CD8-positive, alpha-beta memory T cell (primary cell): ENCODE measurements at regions of chr12 and their contacts with region 1.

Region 1: DNA sequence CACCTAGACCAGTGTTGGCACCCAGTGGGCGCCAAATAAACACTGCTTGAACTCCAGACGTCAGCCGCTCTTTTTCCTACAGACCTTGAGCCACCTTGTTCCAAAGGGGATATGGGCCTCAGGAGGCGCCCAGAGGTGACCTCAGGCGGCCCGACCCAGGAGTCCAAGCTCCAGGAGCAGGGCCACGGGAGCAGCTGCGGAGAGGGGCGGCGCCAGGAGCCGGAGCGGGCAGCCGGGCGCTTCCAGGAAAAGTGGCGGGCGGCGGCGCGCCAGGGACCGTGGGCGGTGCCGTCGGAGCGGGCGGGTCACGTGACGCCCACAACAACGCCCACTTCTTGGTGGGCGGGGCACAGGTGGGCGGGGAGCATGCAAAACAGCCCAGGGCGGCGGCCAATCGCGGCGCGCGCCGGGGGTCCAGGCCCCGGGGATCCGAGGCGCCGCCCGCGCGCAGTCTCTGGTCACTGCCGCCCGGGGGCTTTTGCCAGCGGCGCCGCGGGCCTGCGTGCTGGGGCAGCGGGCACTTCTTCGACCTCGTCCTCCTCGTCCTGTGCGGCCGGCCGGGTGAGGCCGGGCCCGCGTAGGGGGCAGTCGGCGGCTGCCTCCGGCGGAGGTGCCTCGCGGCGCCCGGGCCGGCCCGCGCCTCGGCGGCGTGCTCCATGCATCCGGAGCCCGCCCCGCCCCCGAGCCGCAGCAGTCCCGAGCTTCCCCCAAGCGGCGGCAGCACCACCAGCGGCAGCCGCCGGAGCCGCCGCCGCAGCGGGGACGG is at the start of gene ORAI1:
- DNase-seq: peak; percentile 95 to 98 (median 96)
- H3K4me3 ChIP-seq: peak within 1 kb of the TSS; percentile 95
- H3K4me3 Mint-ChIP-seq: peak within 1 kb of the TSS; percentile 95 to 100 (median 97)
- H3K27ac ChIP-seq: peak within 1 kb of the TSS; percentile 95
- H3K27ac Mint-ChIP-seq: peak within 1 kb of the TSS; percentile 98 to 99 (median 98)
- H3K4me1 ChIP-seq: peaks cover 47% of the 10 kb centered on the region
- H3K4me1 Mint-ChIP-seq: peaks cover 43 to 57% (median 43%) of the 10 kb centered on the region in 3 donors
- H3K27me3 ChIP-seq: no peaks in the 10 kb centered on the region
- H3K27me3 Mint-ChIP-seq: peaks cover 0 to 3% of the 10 kb centered on the region in 2 donors
- total RNA-seq, gene ORAI1: 61.9 to 64.7 TPM

Region 2: DNA sequence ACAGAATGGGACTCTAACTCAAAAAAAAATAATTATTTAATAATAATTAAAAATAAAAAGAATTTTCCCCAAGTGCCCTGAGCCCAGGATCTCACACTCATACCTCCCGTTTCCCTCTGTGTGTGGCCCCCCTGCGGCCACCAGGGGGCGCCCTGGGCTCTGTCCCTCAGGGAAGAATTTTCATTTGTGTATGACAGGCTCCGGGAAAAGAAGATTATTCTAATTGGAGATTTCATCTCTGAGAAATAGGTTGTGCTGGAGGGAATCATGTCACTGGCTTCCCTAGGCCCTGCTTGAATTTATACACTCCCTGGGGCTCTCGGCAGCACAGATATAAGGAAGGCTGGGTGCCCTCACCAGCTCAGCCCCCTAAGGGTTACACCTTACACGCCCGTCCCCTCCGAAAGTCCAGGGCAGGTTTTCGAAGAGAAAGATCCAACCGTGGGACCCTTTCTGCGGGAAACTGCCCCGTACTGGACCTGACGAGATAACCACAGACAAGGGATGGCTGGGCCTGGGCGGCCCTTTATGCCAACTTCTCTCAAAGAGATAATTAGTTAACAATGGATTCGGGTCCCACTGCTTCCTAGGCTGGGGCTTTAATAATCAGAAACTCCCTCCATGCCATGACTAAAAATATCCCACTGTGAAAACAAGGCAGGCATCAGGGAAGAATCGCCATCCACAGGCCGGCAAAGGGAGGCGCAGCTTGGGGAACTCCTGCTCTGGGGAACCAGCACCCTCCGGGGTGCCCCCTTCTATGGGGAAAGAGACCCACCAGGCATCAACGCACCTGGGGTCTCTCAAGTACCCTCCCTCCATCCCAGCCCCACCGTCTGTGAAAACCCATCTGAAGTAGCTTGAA is 126.1 kb before region 1 on chr12:
- CTCF ChIA-PET with region 1: interaction called, 16 read pairs
- POLR2A ChIA-PET with region 1: interaction called, 5 read pairs
- DNase-seq: peak; percentile 61 to 81 (median 67)
- H3K4me3 ChIP-seq: no peak overlapping the region
- H3K4me3 Mint-ChIP-seq: no peak overlapping the region
- H3K27ac ChIP-seq: no peak overlapping the region
- H3K27ac Mint-ChIP-seq: peak overlapping the region in 4 of 8 donors; percentile 19 to 94 (median 73)
- H3K4me1 ChIP-seq: peaks cover 10% of the 10 kb centered on the region
- H3K4me1 Mint-ChIP-seq: peaks cover 28 to 55% (median 32%) of the 10 kb centered on the region in 3 donors
- H3K27me3 ChIP-seq: no peaks in the 10 kb centered on the region
- H3K27me3 Mint-ChIP-seq: no peaks in the 10 kb centered on the region

Region 3: GRCh38 chr12:121579981-121580868 is 46.0 kb before region 1 on chr12:
- CTCF ChIA-PET with region 1: interaction called, 69 read pairs
- POLR2A ChIA-PET with region 1: interaction called, 32 read pairs
- DNase-seq: peak; percentile 72 to 89 (median 73)
- H3K4me3 ChIP-seq: peak overlapping the region; percentile 97
- H3K4me3 Mint-ChIP-seq: peak overlapping the region; percentile 95 to 99 (median 98)
- H3K27ac ChIP-seq: peak overlapping the region; percentile 93
- H3K27ac Mint-ChIP-seq: peak overlapping the region; percentile 97 to 100 (median 99)
- H3K4me1 ChIP-seq: peaks cover 41% of the 10 kb centered on the region
- H3K4me1 Mint-ChIP-seq: peaks cover 41 to 73% (median 48%) of the 10 kb centered on the region in 3 donors
- H3K27me3 ChIP-seq: no peaks in the 10 kb centered on the region
- H3K27me3 Mint-ChIP-seq: no peaks in the 10 kb centered on the region

Region 4: DNA sequence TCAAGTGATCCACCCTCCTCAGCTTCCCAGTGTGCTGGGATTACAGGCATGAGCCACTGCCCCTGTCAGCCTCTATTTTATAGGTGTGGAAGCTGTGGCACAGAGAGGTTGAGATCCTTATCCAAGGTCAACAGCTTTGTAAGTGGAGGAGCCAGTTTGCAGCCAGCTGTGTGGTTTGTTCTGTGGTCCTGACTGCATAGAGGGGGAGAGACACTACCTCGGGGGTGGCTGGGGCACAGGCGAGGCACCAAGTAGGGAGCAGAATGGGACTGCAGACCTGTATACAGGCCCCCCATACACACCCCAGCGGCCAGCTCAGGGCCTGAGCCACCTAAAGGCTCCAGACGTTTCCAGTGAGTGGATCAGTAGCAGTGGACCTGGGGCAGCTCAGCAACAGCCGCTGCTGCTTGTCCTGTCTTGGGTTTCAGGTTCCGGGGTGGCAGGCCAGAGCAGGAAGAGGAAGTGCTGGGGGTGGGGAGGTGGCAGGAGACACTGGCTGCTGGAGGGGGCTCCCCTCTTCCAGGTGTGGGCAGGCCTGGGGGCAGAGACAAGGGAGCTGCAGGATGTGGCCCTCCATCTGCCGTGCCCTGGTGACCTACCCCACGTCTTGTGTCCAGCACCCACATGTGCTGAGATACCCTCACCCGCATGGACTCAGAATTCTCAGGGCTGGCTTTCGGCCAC is 11.1 kb after region 1 on chr12:
- CTCF ChIA-PET with region 1: interaction called, 53 read pairs
- POLR2A ChIA-PET with region 1: interaction called, 31 read pairs
- DNase-seq: peak; percentile 37 to 72 (median 61)
- H3K4me3 ChIP-seq: peak overlapping the region; percentile 53
- H3K4me3 Mint-ChIP-seq: peak overlapping the region; percentile 39 to 88 (median 74)
- H3K27ac ChIP-seq: peak overlapping the region; percentile 69
- H3K27ac Mint-ChIP-seq: peak overlapping the region; percentile 85 to 96 (median 92)
- H3K4me1 ChIP-seq: peaks cover 54% of the 10 kb centered on the region
- H3K4me1 Mint-ChIP-seq: peaks cover 41 to 65% (median 46%) of the 10 kb centered on the region in 3 donors
- H3K27me3 ChIP-seq: no peaks in the 10 kb centered on the region
- H3K27me3 Mint-ChIP-seq: no peaks in the 10 kb centered on the region

Region 5: GRCh38 chr12:121678716-121679580 is 52.7 kb after region 1 on chr12:
- CTCF ChIA-PET with region 1: interaction called, 71 read pairs
- POLR2A ChIA-PET with region 1: interaction called, 3 read pairs
- DNase-seq: no peak
- H3K4me3 ChIP-seq: no peak overlapping the region
- H3K4me3 Mint-ChIP-seq: peak overlapping the region in 1 of 7 donors; percentile 24
- H3K27ac ChIP-seq: no peak overlapping the region
- H3K27ac Mint-ChIP-seq: peak overlapping the region in 6 of 8 donors; percentile 7 to 88 (median 59)
- H3K4me1 ChIP-seq: peaks cover 3% of the 10 kb centered on the region
- H3K4me1 Mint-ChIP-seq: peaks cover 6 to 11% (median 9%) of the 10 kb centered on the region in 3 donors
- H3K27me3 ChIP-seq: no peaks in the 10 kb centered on the region
- H3K27me3 Mint-ChIP-seq: peaks cover 0 to 4% of the 10 kb centered on the region in 2 donors

Region 6: DNA sequence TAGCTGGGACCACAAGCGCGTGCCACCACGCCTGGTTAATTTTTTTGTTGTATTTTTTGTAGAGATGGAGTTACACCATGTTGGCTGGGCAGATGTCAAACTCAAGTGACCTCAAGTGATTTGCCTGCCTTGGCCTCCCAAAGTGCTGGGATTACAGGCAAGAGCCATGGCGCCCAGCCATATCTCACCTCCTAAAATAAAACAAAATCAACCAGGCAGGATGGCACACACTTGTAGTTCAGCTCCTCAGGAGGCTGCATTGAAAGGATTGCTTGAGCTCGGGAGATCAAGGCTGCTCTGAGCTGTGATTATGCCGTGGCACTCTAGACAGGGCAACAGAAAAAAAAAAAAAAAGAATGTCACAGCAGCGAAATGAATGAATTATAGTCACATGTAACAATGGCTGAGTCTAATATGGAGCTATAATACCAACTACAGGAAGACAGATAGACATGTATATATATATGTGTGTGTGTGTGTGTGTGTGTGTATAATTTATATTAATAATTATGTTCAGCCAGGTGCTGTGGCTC is 67.0 kb after region 1 on chr12:
- CTCF ChIA-PET with region 1: no interaction called
- POLR2A ChIA-PET with region 1: no interaction called
- DNase-seq: no peak
- H3K4me3 ChIP-seq: no peak overlapping the region
- H3K4me3 Mint-ChIP-seq: no peak overlapping the region
- H3K27ac ChIP-seq: no peak overlapping the region
- H3K27ac Mint-ChIP-seq: no peak overlapping the region
- H3K4me1 ChIP-seq: peaks cover 4% of the 10 kb centered on the region
- H3K4me1 Mint-ChIP-seq: peaks cover 2 to 6% (median 5%) of the 10 kb centered on the region in 3 donors
- H3K27me3 ChIP-seq: no peaks in the 10 kb centered on the region
- H3K27me3 Mint-ChIP-seq: no peaks in the 10 kb centered on the region

Region 7: GRCh38 chr12:121980191-121980891 is 354.1 kb after region 1 on chr12:
- CTCF ChIA-PET with region 1: no interaction called
- POLR2A ChIA-PET with region 1: no interaction called
- DNase-seq: no peak
- H3K4me3 ChIP-seq: no peak overlapping the region
- H3K4me3 Mint-ChIP-seq: no peak overlapping the region
- H3K27ac ChIP-seq: no peak overlapping the region
- H3K27ac Mint-ChIP-seq: no peak overlapping the region
- H3K4me1 ChIP-seq: no peaks in the 10 kb centered on the region
- H3K4me1 Mint-ChIP-seq: no peaks in the 10 kb centered on the region
- H3K27me3 ChIP-seq: no peaks in the 10 kb centered on the region
- H3K27me3 Mint-ChIP-seq: peaks cover 1 to 7% of the 10 kb centered on the region in 2 donors